Activated T-helper 2 cell treated with anti-CD3 and anti-CD28 coated beads, Interferon-gamma antibody, Interleukin-2, Interleukin-4, amounts not matched to agents 10 μg/mL and 5 μg/mL and 100 μg/mL, durations not matched to agents 14 hours and 24 hours and 36 hours (primary cell): ENCODE measurements at regions of chr19 and their contacts with region 1.

Region 1: DNA sequence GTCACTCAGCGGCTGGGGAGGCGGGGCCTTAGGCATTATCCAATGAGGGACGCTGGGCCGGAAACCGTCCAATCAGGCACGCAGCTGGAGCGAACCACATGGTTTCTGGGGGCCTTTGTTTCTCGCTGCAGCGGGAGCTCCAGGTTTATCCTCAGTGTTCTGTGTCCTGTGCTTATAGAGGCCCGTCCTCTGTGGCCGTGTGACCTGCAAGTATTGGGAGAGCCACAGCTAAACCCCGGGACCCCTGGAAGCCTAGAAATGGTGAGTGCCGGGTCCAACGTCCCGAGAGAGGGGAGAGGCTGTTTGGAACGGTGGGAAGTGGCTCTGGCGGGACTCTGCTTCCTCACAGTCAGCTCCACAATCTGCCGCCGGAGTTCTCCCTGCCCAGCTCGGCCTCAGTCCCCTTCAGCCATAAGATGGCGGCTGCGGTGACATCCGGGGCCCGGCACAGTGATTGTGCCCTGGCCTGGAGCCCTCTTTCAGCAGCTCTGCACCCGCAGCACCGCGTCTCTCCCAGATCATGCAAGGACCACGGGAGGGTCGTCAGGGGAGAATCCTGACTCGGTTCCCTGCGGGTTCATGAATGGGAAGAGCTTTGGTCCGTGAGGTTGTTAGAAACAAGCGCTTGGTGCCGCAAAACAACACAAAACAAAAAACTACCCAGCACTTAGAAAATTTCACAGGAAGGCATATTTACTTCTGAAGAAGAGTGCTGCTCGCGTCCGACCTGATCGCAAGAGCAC is at the start of gene ZNF253:
- DNase-seq: peak; percentile 92
- H3K4me3 Mint-ChIP-seq: peak within 1 kb of the TSS; percentile 93
- H3K27ac Mint-ChIP-seq: peak within 1 kb of the TSS; percentile 97
- H3K4me1 Mint-ChIP-seq: peaks cover 7% of the 10 kb centered on the region
- H3K27me3 Mint-ChIP-seq: no peaks in the 10 kb centered on the region
- total RNA-seq, gene ZNF253: 8.6 and 9.9 TPM in 2 replicates

Region 2: GRCh38 chr19:19826875-19827274 is 39.0 kb before region 1 on chr19:
- intact Hi-C with region 1: no loop called
- DNase-seq: no peak
- H3K4me3 Mint-ChIP-seq: no peak overlapping the region
- H3K27ac Mint-ChIP-seq: no peak overlapping the region
- H3K4me1 Mint-ChIP-seq: no peaks in the 10 kb centered on the region
- H3K27me3 Mint-ChIP-seq: no peaks in the 10 kb centered on the region

Region 3: DNA sequence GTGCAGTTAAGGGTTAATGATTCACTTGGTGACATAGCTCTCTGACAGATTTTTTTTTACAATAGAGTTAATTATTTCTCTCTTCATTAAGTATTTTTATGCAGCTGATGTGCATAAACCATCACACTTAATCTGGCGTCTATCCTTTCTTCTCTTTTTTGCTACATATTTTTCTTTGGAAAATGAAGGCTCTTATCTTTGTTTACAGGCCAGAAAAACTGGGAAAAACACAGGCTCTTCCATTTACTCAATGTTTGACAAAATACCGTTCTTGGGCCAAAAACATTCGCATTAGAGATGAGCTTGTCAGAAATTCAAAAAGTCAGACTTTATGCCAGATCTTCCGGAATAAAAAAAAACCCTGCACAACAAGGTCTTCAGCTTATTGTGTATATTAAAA is 11.8 kb after region 1 on chr19:
- intact Hi-C with region 1: no loop called
- DNase-seq: no peak
- H3K4me3 Mint-ChIP-seq: no peak overlapping the region
- H3K27ac Mint-ChIP-seq: no peak overlapping the region
- H3K4me1 Mint-ChIP-seq: peaks cover 2% of the 10 kb centered on the region
- H3K27me3 Mint-ChIP-seq: no peaks in the 10 kb centered on the region

Region 4: DNA sequence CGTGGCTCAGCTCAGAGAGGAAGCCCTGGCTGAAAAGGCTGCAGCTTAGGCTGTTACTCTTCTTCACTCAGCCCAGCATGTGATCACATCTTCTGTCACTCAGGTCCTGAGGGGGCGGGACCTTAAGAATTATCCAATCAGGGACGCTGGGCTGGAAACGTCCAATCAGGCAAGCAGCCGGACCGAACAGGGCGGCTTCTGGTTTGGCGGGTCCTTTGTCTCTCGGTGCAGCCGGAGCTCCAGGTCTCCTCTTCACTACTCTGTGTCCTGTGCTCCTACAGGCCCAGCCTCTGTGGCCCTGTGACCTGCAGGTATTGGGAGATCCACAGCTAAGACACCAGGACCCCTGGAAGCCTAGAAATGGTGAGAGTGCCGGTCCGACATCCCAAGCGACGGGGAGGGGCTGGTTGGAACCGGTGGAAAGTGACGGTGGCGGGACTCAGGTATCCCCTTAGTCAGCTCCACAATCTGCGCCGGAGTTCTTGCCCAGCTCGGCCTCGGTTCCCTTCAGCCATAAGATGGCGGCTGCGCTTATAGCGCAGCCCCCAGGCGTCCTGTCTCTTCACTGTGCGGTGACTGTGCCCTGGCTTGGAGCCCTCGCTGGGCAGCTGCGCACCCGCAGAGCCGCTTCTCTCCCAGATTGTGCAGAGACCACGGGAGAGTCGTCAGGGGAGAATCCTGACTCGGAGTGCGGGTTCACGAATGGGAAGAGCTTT is 35.0 kb after region 1 on chr19 and contains the start of gene ZNF93:
- intact Hi-C with region 1: loop called (anchors 1 kb)
- DNase-seq: peak; percentile 84
- H3K4me3 Mint-ChIP-seq: peak within 1 kb of the TSS; percentile 93
- H3K27ac Mint-ChIP-seq: peak within 1 kb of the TSS; percentile 92
- H3K4me1 Mint-ChIP-seq: peaks cover 6% of the 10 kb centered on the region
- H3K27me3 Mint-ChIP-seq: no peaks in the 10 kb centered on the region
- total RNA-seq, gene ZNF93: 7.1 and 7.6 TPM in 2 replicates